ENCODE measurements at regions of chr6 and their contacts with region 1.

Region 1: GRCh38 chr6:33886673-33887144 is 82.9 kb upstream of the MLN start:
- DNase-seq: peak; percentile 83
- H3K4me3 ChIP-seq: no peak overlapping the region
- H3K27ac ChIP-seq: peak overlapping the region in 3 of 4 donors; percentile 62 to 69 (median 67)
- H3K4me1 ChIP-seq: peaks cover 0 to 50% (median 47%) of the 10 kb centered on the region in 4 donors
- H3K27me3 ChIP-seq: no peaks in the 10 kb centered on the region
- CTCF ChIP-seq: no peak
- EP300 ChIP-seq: peak; percentile 38 to 92 (median 88)
- POLR2A ChIP-seq: no peak

Region 2: GRCh38 chr6:33642897-33643296 is 243.8 kb before region 1 on chr6:
- intact Hi-C with region 1: no loop called
- DNase-seq: no peak
- H3K4me3 ChIP-seq: no peak overlapping the region
- H3K27ac ChIP-seq: peak overlapping the region in 1 of 4 donors; percentile 6
- H3K4me1 ChIP-seq: no peaks in the 10 kb centered on the region
- H3K27me3 ChIP-seq: no peaks in the 10 kb centered on the region
- CTCF ChIP-seq: no peak
- EP300 ChIP-seq: no peak
- POLR2A ChIP-seq: no peak

Region 3: DNA sequence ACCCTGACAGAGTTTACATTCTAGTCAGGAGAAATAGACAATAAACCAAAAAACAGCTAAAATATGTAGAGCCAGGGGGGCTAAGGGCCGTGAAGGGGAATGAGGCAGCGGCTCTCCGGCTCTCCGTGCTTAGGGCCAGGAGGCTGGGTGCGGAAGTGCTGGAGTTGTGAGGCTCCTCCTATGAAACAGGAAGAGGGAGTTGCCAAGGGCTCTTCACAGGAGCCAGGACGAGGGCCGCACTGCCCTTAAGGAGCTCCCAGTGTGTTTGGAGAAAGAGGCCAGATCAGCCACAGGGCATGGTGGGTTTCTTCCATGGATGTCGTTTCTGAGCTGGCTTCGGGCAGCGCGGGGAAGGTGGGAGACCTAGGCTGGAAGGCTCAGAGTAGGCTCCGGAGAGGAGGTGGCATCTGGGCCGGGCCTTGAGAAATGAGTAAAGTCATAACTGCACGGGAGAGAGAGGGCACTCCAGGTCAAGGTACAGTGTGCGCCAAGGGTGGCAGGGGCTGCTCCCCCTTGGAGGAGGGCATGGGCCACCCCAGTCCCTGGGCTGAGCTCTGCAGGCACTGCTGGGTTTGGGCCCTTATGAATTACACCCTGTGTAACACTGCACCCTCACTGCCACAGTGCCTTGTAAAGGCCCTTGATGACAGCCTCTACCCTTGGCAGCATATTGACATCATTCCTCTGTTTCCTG is 62.1 kb before region 1 on chr6:
- intact Hi-C with region 1: loop called (anchors 1 kb)
- DNase-seq: no peak
- H3K4me3 ChIP-seq: no peak overlapping the region
- H3K27ac ChIP-seq: no peak overlapping the region
- H3K4me1 ChIP-seq: peaks cover 0 to 20% (median 12%) of the 10 kb centered on the region in 4 donors
- H3K27me3 ChIP-seq: peaks cover 0 to 7% (median 0%) of the 10 kb centered on the region in 3 donors
- CTCF ChIP-seq: no peak
- EP300 ChIP-seq: no peak
- POLR2A ChIP-seq: no peak

Measured in sigmoid colon (tissue), 7 donors.